IMR-90 (cell line): ENCODE measurements at regions of chr5 and their contacts with region 1.

Region 1: DNA sequence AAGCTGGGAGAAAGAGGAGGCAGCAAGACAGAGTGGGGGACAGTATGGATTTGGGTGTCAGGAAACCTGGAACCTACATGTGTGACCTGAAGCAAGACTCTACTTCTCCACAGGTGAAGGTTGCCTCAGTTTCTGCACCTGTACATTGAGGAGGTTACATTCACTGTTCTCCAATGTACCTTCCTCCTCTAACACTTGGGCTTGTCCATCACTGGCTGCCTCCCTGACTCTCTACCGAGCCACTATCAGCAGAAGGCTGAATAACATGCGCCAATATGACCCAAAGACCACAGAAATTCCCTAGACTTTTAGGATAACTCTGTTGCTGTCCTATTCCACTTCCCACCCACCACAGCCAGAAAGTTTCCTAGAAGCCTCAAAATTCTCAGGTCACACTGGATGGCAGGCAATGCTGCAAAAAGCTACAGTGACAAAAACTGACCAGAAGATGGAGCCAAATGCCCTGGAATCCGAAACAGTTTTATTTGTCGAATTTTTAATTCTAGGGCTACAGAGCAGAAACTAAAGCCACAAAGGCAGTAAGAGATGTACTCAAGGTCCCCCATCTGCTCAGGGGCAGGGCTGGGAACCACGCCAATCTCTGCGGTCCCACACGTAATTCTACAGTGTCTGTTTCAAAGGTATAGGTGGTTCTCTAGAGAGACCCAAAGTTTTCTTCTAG is 64.4 kb downstream of the FAM114A2 start:
- DNase-seq: peak; percentile 40
- ATAC-seq: peak; percentile 77
- H3K4me3 ChIP-seq: no peak overlapping the region
- H3K27ac ChIP-seq: no peak overlapping the region
- H3K4me1 ChIP-seq: no peaks in the 10 kb centered on the region
- H3K27me3 ChIP-seq: peaks cover 30% of the 10 kb centered on the region
- CTCF ChIP-seq: peak; percentile 86
- POLR2A ChIP-seq: no peak
- RAD21 ChIP-seq: peak; percentile 87

Region 2: GRCh38 chr5:153672347-153673090 is 301.8 kb before region 1 on chr5:
- CTCF ChIA-PET with region 1: no interaction called
- POLR2A ChIA-PET with region 1: no interaction called
- dilution Hi-C with region 1: no loop called
- in situ Hi-C with region 1: no loop called
- intact Hi-C with region 1: no loop called
- DNase-seq: no peak
- ATAC-seq: no peak
- H3K4me3 ChIP-seq: no peak overlapping the region
- H3K27ac ChIP-seq: no peak overlapping the region
- H3K4me1 ChIP-seq: 0 out of 2 replicates have a peak, but pooled peaks cover 2% of the 10 kb centered on the region
- H3K27me3 ChIP-seq: no peaks in the 10 kb centered on the region
- CTCF ChIP-seq: no peak
- POLR2A ChIP-seq: no peak
- RAD21 ChIP-seq: no peak

Region 3: GRCh38 chr5:154097031-154097430 is 122.8 kb after region 1 on chr5:
- CTCF ChIA-PET with region 1: no interaction called
- POLR2A ChIA-PET with region 1: no interaction called
- dilution Hi-C with region 1: no loop called
- in situ Hi-C with region 1: no loop called
- intact Hi-C with region 1: no loop called
- DNase-seq: no peak
- ATAC-seq: no peak
- H3K4me3 ChIP-seq: no peak overlapping the region
- H3K27ac ChIP-seq: no peak overlapping the region
- H3K4me1 ChIP-seq: no peaks in the 10 kb centered on the region
- H3K27me3 ChIP-seq: peaks cover 7% of the 10 kb centered on the region
- CTCF ChIP-seq: no peak
- POLR2A ChIP-seq: no peak
- RAD21 ChIP-seq: no peak

Region 4: GRCh38 chr5:154179846-154180710 is 205.8 kb after region 1 on chr5:
- CTCF ChIA-PET with region 1: no interaction called
- POLR2A ChIA-PET with region 1: no interaction called
- dilution Hi-C with region 1: no loop called
- in situ Hi-C with region 1: no loop called
- intact Hi-C with region 1: loop called (anchors 1 kb)
- DNase-seq: peak; percentile 67
- ATAC-seq: peak; percentile 97
- H3K4me3 ChIP-seq: no peak overlapping the region
- H3K27ac ChIP-seq: no peak overlapping the region
- H3K4me1 ChIP-seq: no peaks in the 10 kb centered on the region
- H3K27me3 ChIP-seq: peaks cover 23% of the 10 kb centered on the region
- CTCF ChIP-seq: peak; percentile 79
- POLR2A ChIP-seq: no peak
- RAD21 ChIP-seq: peak; percentile 64

Region 5: GRCh38 chr5:154412925-154413324 is 438.7 kb after region 1 on chr5:
- CTCF ChIA-PET with region 1: no interaction called
- POLR2A ChIA-PET with region 1: no interaction called
- dilution Hi-C with region 1: no loop called
- in situ Hi-C with region 1: no loop called
- intact Hi-C with region 1: no loop called
- DNase-seq: no peak
- ATAC-seq: no peak
- H3K4me3 ChIP-seq: no peak overlapping the region
- H3K27ac ChIP-seq: no peak overlapping the region
- H3K4me1 ChIP-seq: no peaks in the 10 kb centered on the region
- H3K27me3 ChIP-seq: no peaks in the 10 kb centered on the region
- CTCF ChIP-seq: no peak
- POLR2A ChIP-seq: no peak
- RAD21 ChIP-seq: no peak

Region 6: GRCh38 chr5:154461531-154461930 is 487.3 kb after region 1 on chr5:
- CTCF ChIA-PET with region 1: no interaction called
- POLR2A ChIA-PET with region 1: no interaction called
- dilution Hi-C with region 1: no loop called
- in situ Hi-C with region 1: no loop called
- intact Hi-C with region 1: loop called (anchors 5 kb)
- DNase-seq: peak; percentile 34
- ATAC-seq: peak; percentile 62
- H3K4me3 ChIP-seq: no peak overlapping the region
- H3K27ac ChIP-seq: no peak overlapping the region
- H3K4me1 ChIP-seq: peaks cover under 1% of the 10 kb centered on the region; the same call in 1 of the 2 replicates
- H3K27me3 ChIP-seq: no peaks in the 10 kb centered on the region
- CTCF ChIP-seq: peak; percentile 35
- POLR2A ChIP-seq: no peak
- RAD21 ChIP-seq: no peak; the same call in 1 of the 2 replicates

Region 7: DNA sequence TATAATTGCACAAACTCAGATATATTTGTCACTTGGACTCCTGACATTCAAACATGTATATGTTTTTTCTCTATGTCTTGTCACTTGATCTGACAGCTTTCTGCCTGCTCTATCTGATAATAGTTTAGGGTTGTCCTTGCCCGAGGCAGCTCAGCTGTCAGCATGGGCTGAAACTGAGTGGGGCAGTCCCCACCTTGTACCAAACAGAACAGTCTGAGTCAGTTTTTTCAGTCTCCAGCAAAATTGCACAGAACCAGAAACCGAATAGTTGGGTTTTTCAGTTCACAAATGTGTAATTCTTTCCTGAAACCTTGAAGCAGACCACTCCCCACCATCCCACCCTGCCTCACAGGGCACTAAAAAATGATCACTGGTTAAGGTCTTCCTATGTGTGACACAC is 513.3 kb after region 1 on chr5:
- CTCF ChIA-PET with region 1: no interaction called
- POLR2A ChIA-PET with region 1: interaction called, 11 read pairs
- dilution Hi-C with region 1: no loop called
- in situ Hi-C with region 1: no loop called
- intact Hi-C with region 1: no loop called
- DNase-seq: no peak
- ATAC-seq: no peak
- H3K4me3 ChIP-seq: no peak overlapping the region
- H3K27ac ChIP-seq: no peak overlapping the region
- H3K4me1 ChIP-seq: no peaks in the 10 kb centered on the region
- H3K27me3 ChIP-seq: peaks cover 69% of the 10 kb centered on the region
- CTCF ChIP-seq: no peak
- POLR2A ChIP-seq: no peak
- RAD21 ChIP-seq: no peak